ENCODE measurements at regions of chr2 and their contacts with region 1.

Region 1: DNA sequence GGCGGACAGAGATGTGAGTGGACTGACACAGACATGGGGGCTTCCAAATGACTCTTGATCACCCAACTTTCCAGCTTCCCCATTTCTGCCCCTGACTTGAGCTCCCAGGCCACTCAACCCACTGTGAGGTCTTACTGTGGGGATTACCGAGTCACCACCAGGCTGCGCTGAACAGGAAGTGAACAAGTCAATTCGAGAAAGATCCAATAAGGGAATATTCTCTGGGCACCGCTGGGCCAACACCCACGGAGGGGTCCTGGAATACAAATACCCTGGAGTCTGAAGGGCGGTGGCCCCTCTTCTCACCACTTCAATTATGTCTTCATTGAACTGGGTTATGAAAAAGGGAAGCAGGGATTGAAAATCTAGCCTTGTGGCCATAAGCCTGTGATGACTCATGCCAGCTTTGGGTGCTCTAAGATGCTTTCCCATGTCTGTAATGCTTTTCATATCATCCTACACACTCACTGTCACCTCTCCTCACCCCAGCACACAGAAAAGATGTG is 37.7 kb downstream of the BCL11A start:
- DNase-seq: no peak
- H3K4me3 ChIP-seq: no peak overlapping the region
- H3K4me3 Mint-ChIP-seq: no peak overlapping the region
- H3K27ac Mint-ChIP-seq: peak overlapping the region; percentile 83
- H3K4me1 ChIP-seq: peaks cover 45% of the 10 kb centered on the region
- H3K4me1 Mint-ChIP-seq: peaks cover 28% of the 10 kb centered on the region
- H3K27me3 ChIP-seq: no peaks in the 10 kb centered on the region
- H3K27me3 Mint-ChIP-seq: no peaks in the 10 kb centered on the region
- CTCF ChIP-seq: no peak

Region 2: DNA sequence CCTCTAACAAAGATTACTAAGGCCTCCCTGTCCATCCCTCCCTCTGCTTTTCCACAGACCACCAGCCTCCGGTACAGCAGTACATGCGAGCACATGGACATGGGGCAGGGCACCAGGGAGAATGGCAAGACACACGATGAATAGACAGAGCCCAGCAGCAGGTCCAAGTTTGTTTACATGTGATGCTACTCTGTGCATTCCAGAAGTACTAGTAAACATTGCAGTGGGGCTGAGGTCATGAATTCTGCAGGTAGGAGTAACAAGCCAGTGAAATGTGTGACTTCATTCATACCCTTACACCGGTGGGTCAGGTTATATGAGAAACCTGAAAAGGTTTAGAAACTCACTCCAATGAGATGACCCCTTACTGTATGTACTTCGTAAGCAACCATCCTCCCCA is 168.0 kb before region 1 on chr2:
- CTCF ChIA-PET with region 1: no interaction called
- POLR2A ChIA-PET with region 1: no interaction called
- intact Hi-C with region 1: no loop called
- DNase-seq: no peak
- H3K4me3 ChIP-seq: no peak overlapping the region
- H3K4me3 Mint-ChIP-seq: no peak overlapping the region
- H3K27ac Mint-ChIP-seq: no peak overlapping the region
- H3K4me1 ChIP-seq: no peaks in the 10 kb centered on the region
- H3K4me1 Mint-ChIP-seq: no peaks in the 10 kb centered on the region
- H3K27me3 ChIP-seq: no peaks in the 10 kb centered on the region
- H3K27me3 Mint-ChIP-seq: peaks cover 4% of the 10 kb centered on the region
- CTCF ChIP-seq: no peak

Region 3: GRCh38 chr2:60433018-60433616 is 82.7 kb before region 1 on chr2:
- CTCF ChIA-PET with region 1: no interaction called
- POLR2A ChIA-PET with region 1: no interaction called
- intact Hi-C with region 1: loop called (anchors 5 kb)
- DNase-seq: no peak
- H3K4me3 ChIP-seq: no peak overlapping the region
- H3K4me3 Mint-ChIP-seq: no peak overlapping the region
- H3K27ac Mint-ChIP-seq: peak overlapping the region; percentile 17
- H3K4me1 ChIP-seq: peaks cover 24% of the 10 kb centered on the region
- H3K4me1 Mint-ChIP-seq: peaks cover 24% of the 10 kb centered on the region
- H3K27me3 ChIP-seq: no peaks in the 10 kb centered on the region
- H3K27me3 Mint-ChIP-seq: no peaks in the 10 kb centered on the region
- CTCF ChIP-seq: no peak

Region 4: DNA sequence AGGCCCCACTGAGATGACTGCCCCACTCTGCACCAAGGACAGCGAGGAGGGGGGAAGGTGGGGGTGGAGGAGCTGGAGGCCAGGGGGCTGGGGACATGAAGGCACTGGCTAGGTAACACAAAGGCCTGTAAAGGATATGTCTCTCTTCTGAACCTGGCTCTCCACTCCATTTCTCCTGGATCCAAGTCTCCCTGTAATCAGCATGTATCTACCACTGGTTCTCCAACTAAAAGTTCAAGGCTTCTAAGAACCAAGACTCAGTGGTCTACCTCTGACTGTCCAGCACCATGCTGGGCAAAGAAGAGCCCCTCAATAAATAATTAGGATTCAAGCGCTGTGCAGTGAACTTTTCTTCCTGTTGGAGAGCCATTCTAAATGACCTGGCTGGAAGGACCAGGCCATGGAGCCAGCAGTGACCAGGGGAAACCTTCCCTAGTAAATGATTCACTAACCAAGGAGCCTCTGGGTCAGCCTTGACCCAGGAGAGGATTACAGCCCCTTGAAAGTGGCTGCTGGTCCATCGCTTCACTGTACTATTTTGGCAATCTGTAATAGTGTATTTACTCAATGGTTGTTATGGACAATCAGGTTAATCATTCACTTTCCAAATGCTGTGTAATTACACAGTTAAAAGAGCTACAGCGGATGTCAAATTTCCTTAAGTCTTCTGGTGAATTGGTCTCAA is 35.5 kb before region 1 on chr2:
- CTCF ChIA-PET with region 1: no interaction called
- POLR2A ChIA-PET with region 1: no interaction called
- intact Hi-C with region 1: loop called (anchors 2 kb)
- DNase-seq: peak; percentile 71 to 74
- H3K4me3 ChIP-seq: no peak overlapping the region
- H3K4me3 Mint-ChIP-seq: no peak overlapping the region
- H3K27ac Mint-ChIP-seq: no peak overlapping the region
- H3K4me1 ChIP-seq: peaks cover 15% of the 10 kb centered on the region
- H3K4me1 Mint-ChIP-seq: peaks cover 22% of the 10 kb centered on the region
- H3K27me3 ChIP-seq: no peaks in the 10 kb centered on the region
- H3K27me3 Mint-ChIP-seq: no peaks in the 10 kb centered on the region
- CTCF ChIP-seq: no peak

Region 5: GRCh38 chr2:60530660-60531281 is 15.0 kb after region 1 on chr2:
- CTCF ChIA-PET with region 1: no interaction called
- POLR2A ChIA-PET with region 1: no interaction called
- intact Hi-C with region 1: loop called (anchors 2 kb)
- DNase-seq: peak; percentile 52 to 62
- H3K4me3 ChIP-seq: no peak overlapping the region
- H3K4me3 Mint-ChIP-seq: peak overlapping the region; percentile 45
- H3K27ac Mint-ChIP-seq: no peak overlapping the region
- H3K4me1 ChIP-seq: peaks cover 9% of the 10 kb centered on the region
- H3K4me1 Mint-ChIP-seq: peaks cover 40% of the 10 kb centered on the region
- H3K27me3 ChIP-seq: no peaks in the 10 kb centered on the region
- H3K27me3 Mint-ChIP-seq: no peaks in the 10 kb centered on the region
- CTCF ChIP-seq: no peak